Gastrocnemius medialis (tissue), 4 donors: ENCODE measurements at regions of chr1 and their contacts with region 1.

Region 1: GRCh38 chr1:234610348-234611152 is 572 bp upstream of the IRF2BP2 start:
- DNase-seq: peak; percentile 90 to 96
- ATAC-seq: peak; percentile 32 to 37
- H3K4me3 ChIP-seq: peak overlapping the region; percentile 67 to 78 (median 72)
- H3K27ac ChIP-seq: peak overlapping the region; percentile 98 to 99 (median 98)
- H3K4me1 ChIP-seq: peaks cover 30 to 52% of the 10 kb centered on the region in 2 donors
- H3K27me3 ChIP-seq: no peaks in the 10 kb centered on the region
- CTCF ChIP-seq: peak in 2 of 5 experiments; percentile 25 to 35
- POLR2A ChIP-seq: peak in 1 of 2 donors; percentile 99

Region 2: GRCh38 chr1:234716908-234717375 is 106.4 kb after region 1 on chr1:
- in situ Hi-C with region 1: loop called in 1 of 4 experiments (anchors 5 kb)
- intact Hi-C with region 1: no loop called
- DNase-seq: peak in 1 of 2 donors; percentile 45
- ATAC-seq: peak; percentile 56 to 59
- H3K4me3 ChIP-seq: no peak overlapping the region
- H3K27ac ChIP-seq: peak overlapping the region; percentile 93 to 98 (median 96)
- H3K4me1 ChIP-seq: peaks cover 67 to 68% of the 10 kb centered on the region in 2 donors
- H3K27me3 ChIP-seq: no peaks in the 10 kb centered on the region
- CTCF ChIP-seq: no peak
- POLR2A ChIP-seq: peak in 1 of 2 donors; percentile 19

Region 3: GRCh38 chr1:234881893-234882771 is 271.6 kb after region 1 on chr1:
- in situ Hi-C with region 1: loop called (anchors 5 to 25 kb)
- intact Hi-C with region 1: loop called (anchors 1 kb)
- DNase-seq: no peak
- ATAC-seq: no peak
- H3K4me3 ChIP-seq: no peak overlapping the region
- H3K27ac ChIP-seq: peak overlapping the region in 1 of 4 donors; percentile 83
- H3K4me1 ChIP-seq: peaks cover 37 to 44% of the 10 kb centered on the region in 2 donors
- H3K27me3 ChIP-seq: no peaks in the 10 kb centered on the region
- CTCF ChIP-seq: no peak
- POLR2A ChIP-seq: no peak

Region 4: DNA sequence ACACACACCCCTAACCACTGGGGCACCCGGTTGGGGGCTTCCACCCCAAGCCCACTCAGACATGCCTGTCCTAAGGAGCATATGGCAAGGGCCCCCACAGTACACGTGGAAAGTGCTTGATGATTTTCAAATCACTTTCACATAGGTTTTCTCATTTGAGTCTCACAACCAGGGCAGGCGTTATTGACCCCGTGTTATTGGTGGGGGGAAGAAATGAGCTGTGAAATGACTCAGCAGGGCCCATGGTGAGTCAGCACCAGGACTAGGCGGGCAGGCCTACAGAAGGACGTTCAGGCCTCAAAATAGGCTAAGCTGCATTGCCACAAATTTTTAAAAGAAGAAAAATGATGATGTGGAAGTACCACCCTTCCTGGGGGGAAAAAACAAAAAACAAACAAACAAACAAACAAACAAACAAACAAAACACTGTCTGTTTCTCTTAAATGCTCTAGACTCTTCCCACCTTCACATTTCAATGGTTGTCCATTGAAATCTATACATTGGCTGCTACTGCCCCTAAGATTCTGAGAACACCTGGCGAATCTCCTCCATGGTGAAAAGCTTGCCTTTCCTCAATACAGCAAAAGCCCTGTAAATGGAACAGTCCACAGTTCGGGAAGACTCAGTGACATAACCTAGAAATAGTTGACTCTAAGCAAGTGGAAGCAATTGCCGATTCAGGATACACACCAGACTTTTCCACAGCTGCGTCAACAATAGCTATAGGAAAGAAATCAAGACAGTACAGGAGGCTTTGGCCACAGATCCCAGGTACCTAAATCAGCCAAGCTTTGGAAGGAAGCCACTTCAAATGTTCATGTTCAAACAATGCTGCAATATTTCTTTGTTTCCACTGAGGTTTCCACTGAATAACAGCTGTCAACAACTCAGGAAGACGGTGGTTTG is 283.4 kb after region 1 on chr1:
- in situ Hi-C with region 1: loop called in 3 of 4 experiments (anchors 25 kb)
- intact Hi-C with region 1: no loop called
- DNase-seq: no peak
- ATAC-seq: no peak
- H3K4me3 ChIP-seq: no peak overlapping the region
- H3K27ac ChIP-seq: peak overlapping the region; percentile 64 to 75 (median 66)
- H3K4me1 ChIP-seq: peaks cover 37 to 39% of the 10 kb centered on the region in 2 donors
- H3K27me3 ChIP-seq: no peaks in the 10 kb centered on the region
- CTCF ChIP-seq: no peak
- POLR2A ChIP-seq: no peak

Region 5: DNA sequence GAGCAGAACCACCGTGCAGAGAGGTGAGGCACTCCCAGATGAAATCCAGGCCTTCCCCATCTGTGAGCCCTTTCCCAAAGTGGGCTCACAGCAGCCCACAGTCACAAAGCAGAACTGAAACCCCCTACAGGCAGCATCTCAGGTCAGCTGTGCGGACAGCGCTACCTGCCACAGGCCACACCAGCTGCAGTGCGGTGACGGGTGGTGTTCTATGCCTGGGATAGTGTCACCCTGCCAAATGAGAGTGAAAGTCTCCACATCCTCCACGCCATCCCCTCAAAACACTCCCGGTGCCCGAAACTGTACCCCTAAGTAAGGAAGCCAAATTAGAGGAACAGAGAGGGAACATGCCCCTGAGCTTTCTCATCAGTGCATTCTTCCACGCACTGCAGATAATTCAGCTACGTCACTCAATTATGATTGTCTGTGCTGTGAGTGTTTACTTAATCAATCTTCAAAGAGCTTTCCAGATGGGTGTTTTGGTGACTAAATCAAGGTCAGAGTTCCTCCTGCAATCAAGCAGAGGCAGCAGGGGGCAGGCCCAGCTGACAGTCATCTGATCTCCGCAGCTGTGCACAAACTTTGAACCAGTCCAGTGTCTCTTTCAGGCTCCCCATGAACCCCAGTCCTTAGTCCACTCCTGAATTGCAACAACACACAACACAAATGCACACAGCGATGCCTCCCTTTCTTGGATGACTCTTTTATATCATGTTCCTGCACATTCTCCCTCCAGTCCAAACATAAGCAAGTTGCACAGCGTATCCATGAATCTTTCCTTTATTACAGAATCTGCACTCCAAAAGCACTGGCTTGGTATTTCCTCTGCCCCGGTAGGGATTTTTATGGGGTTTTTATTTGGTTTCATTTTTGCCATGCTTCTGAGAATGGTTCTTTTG is 368.1 kb after region 1 on chr1:
- in situ Hi-C with region 1: loop called in 1 of 4 experiments (anchors 5 kb)
- intact Hi-C with region 1: no loop called
- DNase-seq: peak; percentile 58 to 68
- ATAC-seq: peak in 1 of 2 donors; percentile 16
- H3K4me3 ChIP-seq: no peak overlapping the region
- H3K27ac ChIP-seq: peak overlapping the region; percentile 83 to 91 (median 89)
- H3K4me1 ChIP-seq: peaks cover 46 to 68% of the 10 kb centered on the region in 2 donors
- H3K27me3 ChIP-seq: no peaks in the 10 kb centered on the region
- CTCF ChIP-seq: no peak
- POLR2A ChIP-seq: peak; percentile 7 to 23

Region 6: DNA sequence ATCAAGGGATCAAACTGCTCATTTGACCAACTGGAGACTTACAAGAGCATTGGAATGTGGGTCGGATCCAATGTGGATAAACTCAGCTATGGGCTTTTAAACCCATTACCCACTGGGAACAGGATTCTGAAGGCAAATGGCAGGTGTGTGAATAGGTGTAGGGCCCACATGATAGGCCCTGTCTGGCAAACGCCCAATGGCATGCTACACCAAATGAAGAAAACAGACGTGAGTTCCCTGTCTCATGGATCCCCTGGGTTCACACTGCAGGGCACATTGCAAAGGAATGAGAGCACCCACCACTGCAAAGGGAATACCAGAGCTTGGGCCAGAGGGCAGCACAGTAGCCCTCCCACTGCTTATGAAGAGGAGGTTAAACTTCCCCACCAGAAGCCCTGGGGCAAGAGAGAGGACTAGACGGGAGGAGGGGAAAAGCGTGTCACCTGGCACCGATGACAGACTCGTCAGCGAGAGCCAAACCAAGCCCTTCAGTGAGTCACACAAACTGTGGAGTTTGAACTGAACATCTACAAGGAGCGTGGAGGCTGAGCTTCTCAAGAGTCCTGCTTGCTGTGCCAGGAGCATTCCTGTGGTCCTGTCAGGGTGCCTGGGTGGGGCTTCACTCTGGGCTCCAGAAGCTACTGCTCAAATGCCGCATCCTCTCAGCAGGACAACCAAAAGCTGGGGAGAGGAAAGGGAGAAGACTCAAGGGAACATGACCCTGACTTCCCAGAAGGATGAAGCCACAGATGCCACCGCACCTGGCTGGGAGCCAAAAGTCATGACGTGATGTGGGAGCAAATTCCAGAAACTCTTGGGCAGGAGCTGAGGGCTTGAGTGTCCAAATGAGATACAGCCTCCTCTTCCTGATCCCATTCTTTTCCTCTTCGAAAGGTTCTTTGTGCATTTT is 457.0 kb after region 1 on chr1:
- in situ Hi-C with region 1: no loop called
- intact Hi-C with region 1: loop called (anchors 1 kb)
- DNase-seq: peak; percentile 92 to 96
- ATAC-seq: peak; percentile 77 to 82
- H3K4me3 ChIP-seq: no peak overlapping the region
- H3K27ac ChIP-seq: peak overlapping the region; percentile 87 to 100 (median 90)
- H3K4me1 ChIP-seq: peaks cover 53 to 58% of the 10 kb centered on the region in 2 donors
- H3K27me3 ChIP-seq: no peaks in the 10 kb centered on the region
- CTCF ChIP-seq: no peak
- POLR2A ChIP-seq: peak; percentile 40 to 54

Region 7: GRCh38 chr1:235504496-235505222 is 894.1 kb after region 1 on chr1:
- in situ Hi-C with region 1: no loop called
- intact Hi-C with region 1: loop called (anchors 5 kb)
- DNase-seq: peak; percentile 98 to 99
- ATAC-seq: peak; percentile 77 to 80
- H3K4me3 ChIP-seq: peak overlapping the region; percentile 74 to 92 (median 86)
- H3K27ac ChIP-seq: peak overlapping the region; percentile 99 to 100 (median 99)
- H3K4me1 ChIP-seq: peaks cover 35 to 38% of the 10 kb centered on the region in 2 donors
- H3K27me3 ChIP-seq: no peaks in the 10 kb centered on the region
- CTCF ChIP-seq: peak; percentile 89 to 94 (median 90)
- POLR2A ChIP-seq: peak; percentile 83